ENCODE measurements at regions of chr9 and their contacts with region 1.

Region 1: DNA sequence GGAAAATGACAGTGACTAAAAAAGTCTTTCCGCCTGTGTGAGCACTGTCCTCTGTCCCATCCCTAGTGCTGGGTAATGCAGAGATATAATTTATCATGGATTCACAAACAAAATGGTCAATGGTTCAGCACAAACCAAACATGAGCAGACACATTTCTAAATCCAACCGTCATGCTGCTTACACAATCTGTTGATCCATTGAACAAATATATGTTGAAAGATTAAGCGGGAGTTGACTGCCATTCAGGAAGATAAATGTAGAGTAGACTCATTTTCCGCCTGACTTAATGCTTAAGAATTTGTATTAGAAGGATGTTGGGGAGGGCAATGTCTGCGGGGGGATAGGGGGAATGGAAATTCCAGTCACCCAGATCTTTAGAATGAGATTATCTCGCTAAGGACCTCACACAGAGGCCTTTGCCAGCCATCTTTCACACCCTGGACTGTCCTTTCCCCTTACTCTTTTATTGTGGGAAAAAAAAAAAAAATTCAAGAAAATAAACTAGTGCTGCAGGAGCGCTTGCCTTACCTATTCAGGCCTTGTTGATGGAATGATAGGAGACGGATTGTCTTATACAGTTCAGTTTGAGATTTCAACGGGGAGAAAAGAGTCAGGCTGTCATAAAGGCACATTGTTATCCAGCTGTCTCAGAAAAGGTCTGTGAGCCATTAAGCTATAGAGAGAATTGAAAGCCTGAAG is 153.7 kb downstream of the TLE1 start:
- DNase-seq: peak; percentile 26 to 27
- H3K4me3 ChIP-seq: no peak overlapping the region
- H3K4me3 Mint-ChIP-seq: no peak overlapping the region
- H3K27ac Mint-ChIP-seq: no peak overlapping the region
- H3K4me1 ChIP-seq: no peaks in the 10 kb centered on the region
- H3K4me1 Mint-ChIP-seq: no peaks in the 10 kb centered on the region
- H3K27me3 ChIP-seq: no peaks in the 10 kb centered on the region
- H3K27me3 Mint-ChIP-seq: no peaks in the 10 kb centered on the region
- CTCF ChIP-seq: no peak

Region 2: GRCh38 chr9:81632599-81632998 is 96.9 kb after region 1 on chr9:
- CTCF ChIA-PET with region 1: no interaction called
- POLR2A ChIA-PET with region 1: no interaction called
- intact Hi-C with region 1: loop called (anchors 5 kb)
- DNase-seq: no peak
- H3K4me3 ChIP-seq: no peak overlapping the region
- H3K4me3 Mint-ChIP-seq: no peak overlapping the region
- H3K27ac Mint-ChIP-seq: no peak overlapping the region
- H3K4me1 ChIP-seq: no peaks in the 10 kb centered on the region
- H3K4me1 Mint-ChIP-seq: no peaks in the 10 kb centered on the region
- H3K27me3 ChIP-seq: no peaks in the 10 kb centered on the region
- H3K27me3 Mint-ChIP-seq: no peaks in the 10 kb centered on the region
- CTCF ChIP-seq: no peak

Region 3: DNA sequence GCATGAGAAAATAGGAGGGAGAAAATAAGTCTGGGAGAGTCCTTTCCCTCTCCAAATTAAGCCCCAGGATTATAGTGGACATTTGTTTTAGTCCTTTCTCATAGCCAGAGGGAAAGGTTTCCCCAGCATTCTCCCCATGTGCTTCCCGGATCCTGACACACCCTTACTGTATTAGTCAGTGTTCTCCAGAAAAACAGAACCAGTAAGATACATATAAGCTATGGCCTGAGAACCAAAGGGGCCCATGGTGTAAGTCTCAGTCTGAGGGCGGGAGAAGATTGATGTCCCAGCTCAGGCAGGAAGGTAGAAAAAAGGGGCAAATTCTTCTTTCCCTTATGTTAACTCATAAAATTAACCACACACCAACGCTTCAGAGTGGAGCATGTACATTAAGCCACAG is 366.9 kb after region 1 on chr9:
- CTCF ChIA-PET with region 1: no interaction called
- POLR2A ChIA-PET with region 1: no interaction called
- intact Hi-C with region 1: no loop called
- DNase-seq: no peak
- H3K4me3 ChIP-seq: no peak overlapping the region
- H3K4me3 Mint-ChIP-seq: no peak overlapping the region
- H3K27ac Mint-ChIP-seq: no peak overlapping the region
- H3K4me1 ChIP-seq: no peaks in the 10 kb centered on the region
- H3K4me1 Mint-ChIP-seq: no peaks in the 10 kb centered on the region
- H3K27me3 ChIP-seq: no peaks in the 10 kb centered on the region
- H3K27me3 Mint-ChIP-seq: no peaks in the 10 kb centered on the region
- CTCF ChIP-seq: no peak

Measured in Caco-2 (cell line).